ENCODE measurements at regions of chr7 and their contacts with region 1.

Region 1: GRCh38 chr7:134710859-134711624 is 64.4 kb downstream of the BPGM start:
- DNase-seq: peak; percentile 80
- ATAC-seq: peak; percentile 94
- H3K4me3 Mint-ChIP-seq: peak overlapping the region; percentile 78
- H3K27ac Mint-ChIP-seq: peak overlapping the region; percentile 97
- H3K4me1 Mint-ChIP-seq: peaks cover 31% of the 10 kb centered on the region
- H3K27me3 Mint-ChIP-seq: no peaks in the 10 kb centered on the region

Region 2: DNA sequence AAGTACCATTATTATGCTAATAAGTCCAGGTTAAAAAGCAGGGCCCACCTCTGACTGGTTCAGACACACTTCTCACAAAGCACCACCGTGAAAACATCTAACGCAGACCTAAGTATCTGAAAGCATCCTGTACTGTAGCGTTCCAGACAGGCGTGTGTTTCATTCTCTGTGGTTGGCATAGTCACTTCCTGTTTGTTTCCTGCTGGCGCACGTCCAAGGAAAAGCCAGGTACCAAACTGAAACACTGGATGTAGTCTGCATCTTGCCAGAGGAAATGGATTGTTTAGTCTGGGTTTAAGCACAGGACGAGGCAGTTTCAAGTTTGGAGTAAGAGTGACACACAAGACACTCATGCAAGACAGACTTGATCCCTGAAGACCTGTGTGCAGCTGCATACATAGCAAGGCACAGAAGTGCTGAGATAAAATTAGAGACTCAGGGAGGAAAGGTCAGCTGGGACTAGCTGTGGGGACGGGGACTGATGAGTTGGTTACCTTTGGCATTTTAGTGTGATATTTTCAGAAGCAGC is 41.1 kb before region 1 on chr7:
- CTCF ChIA-PET with region 1: interaction called, 3 read pairs
- POLR2A ChIA-PET with region 1: no interaction called
- intact Hi-C with region 1: loop called (anchors 1 to 2 kb)
- DNase-seq: peak; percentile 83
- ATAC-seq: peak; percentile 75
- H3K4me3 Mint-ChIP-seq: peak overlapping the region; percentile 50
- H3K27ac Mint-ChIP-seq: peak overlapping the region; percentile 89
- H3K4me1 Mint-ChIP-seq: peaks cover 51% of the 10 kb centered on the region
- H3K27me3 Mint-ChIP-seq: no peaks in the 10 kb centered on the region

Region 3: DNA sequence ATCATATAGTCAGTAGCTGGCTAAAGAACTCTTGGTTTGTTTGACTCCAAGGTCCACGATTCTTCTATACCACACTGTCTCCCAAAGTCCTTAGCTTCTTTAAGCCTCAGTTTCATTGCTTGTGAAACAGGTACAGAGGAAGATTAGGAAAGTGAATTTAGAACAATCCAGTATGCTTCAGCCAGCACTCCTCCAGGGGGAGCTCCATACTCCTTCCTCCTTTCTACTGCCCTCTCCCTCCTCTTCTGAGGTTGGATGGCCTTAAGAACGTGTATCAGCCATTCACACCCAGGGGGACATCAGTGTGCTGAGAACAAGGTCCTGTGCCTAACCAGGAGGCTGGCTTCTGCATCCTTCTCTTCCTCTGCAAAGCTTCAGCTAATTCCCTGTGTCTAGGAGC is 13.6 kb after region 1 on chr7:
- CTCF ChIA-PET with region 1: interaction called, 10 read pairs
- POLR2A ChIA-PET with region 1: no interaction called
- intact Hi-C with region 1: no loop called
- DNase-seq: peak; percentile 37
- ATAC-seq: peak; percentile 68
- H3K4me3 Mint-ChIP-seq: no peak overlapping the region
- H3K27ac Mint-ChIP-seq: no peak overlapping the region
- H3K4me1 Mint-ChIP-seq: no peaks in the 10 kb centered on the region
- H3K27me3 Mint-ChIP-seq: no peaks in the 10 kb centered on the region

Region 4: GRCh38 chr7:134737566-134738345 is 26.7 kb after region 1 on chr7:
- CTCF ChIA-PET with region 1: no interaction called
- POLR2A ChIA-PET with region 1: no interaction called
- intact Hi-C with region 1: loop called (anchors 1 to 2 kb)
- DNase-seq: peak; percentile 60
- ATAC-seq: peak; percentile 94
- H3K4me3 Mint-ChIP-seq: peak overlapping the region; percentile 26
- H3K27ac Mint-ChIP-seq: peak overlapping the region; percentile 84
- H3K4me1 Mint-ChIP-seq: peaks cover 39% of the 10 kb centered on the region
- H3K27me3 Mint-ChIP-seq: no peaks in the 10 kb centered on the region

Region 5: DNA sequence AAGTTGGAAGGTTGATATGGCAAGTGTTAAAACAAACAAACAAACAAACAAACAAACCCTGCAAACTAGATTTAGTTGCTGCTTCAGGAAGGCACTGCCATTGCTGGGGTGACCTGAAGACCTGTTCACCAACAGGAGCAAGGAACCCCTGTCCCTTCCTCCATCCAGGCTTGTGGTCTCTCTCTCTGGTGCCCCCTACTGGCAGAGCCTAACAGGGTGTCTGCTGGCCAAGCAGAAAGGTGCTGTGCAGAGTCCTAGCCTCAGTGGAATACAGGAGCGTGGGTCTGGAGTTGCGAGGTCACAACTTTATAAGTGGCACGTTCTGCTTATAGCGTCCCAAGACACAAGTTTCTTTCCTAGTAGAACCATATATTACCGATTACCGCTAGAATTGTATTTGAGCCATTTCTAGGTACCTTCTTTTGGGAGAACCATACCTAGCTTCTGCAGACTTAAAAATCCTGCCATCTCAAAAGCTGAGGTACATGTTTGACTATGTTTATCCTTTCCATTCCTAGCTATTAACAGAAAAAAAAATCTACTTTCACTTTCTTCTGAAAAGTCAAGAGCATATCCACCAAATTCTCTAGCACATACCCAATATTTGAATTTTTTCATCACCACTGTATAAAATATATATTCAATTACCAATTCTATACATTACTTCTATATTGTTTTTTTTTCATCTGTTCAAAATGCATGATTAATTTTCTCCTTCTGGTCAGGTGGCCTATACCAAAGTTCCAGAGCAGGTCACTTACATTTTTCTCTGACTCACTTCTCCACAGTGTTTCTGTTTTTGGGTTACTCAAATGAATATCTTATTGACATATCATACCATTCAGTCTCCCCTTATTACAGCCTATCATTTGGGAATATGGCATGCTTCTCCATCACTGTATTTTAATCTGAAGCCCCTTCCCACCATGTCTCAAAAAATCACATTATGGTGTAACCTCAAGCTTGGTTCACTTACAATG is 39.3 kb after region 1 on chr7:
- CTCF ChIA-PET with region 1: interaction called, 7 read pairs
- POLR2A ChIA-PET with region 1: no interaction called
- intact Hi-C with region 1: loop called in 1 of 2 experiments (anchors 2 kb)
- DNase-seq: peak; percentile 84
- ATAC-seq: peak; percentile 87
- H3K4me3 Mint-ChIP-seq: no peak overlapping the region
- H3K27ac Mint-ChIP-seq: no peak overlapping the region
- H3K4me1 Mint-ChIP-seq: peaks cover 17% of the 10 kb centered on the region
- H3K27me3 Mint-ChIP-seq: no peaks in the 10 kb centered on the region

Region 6: DNA sequence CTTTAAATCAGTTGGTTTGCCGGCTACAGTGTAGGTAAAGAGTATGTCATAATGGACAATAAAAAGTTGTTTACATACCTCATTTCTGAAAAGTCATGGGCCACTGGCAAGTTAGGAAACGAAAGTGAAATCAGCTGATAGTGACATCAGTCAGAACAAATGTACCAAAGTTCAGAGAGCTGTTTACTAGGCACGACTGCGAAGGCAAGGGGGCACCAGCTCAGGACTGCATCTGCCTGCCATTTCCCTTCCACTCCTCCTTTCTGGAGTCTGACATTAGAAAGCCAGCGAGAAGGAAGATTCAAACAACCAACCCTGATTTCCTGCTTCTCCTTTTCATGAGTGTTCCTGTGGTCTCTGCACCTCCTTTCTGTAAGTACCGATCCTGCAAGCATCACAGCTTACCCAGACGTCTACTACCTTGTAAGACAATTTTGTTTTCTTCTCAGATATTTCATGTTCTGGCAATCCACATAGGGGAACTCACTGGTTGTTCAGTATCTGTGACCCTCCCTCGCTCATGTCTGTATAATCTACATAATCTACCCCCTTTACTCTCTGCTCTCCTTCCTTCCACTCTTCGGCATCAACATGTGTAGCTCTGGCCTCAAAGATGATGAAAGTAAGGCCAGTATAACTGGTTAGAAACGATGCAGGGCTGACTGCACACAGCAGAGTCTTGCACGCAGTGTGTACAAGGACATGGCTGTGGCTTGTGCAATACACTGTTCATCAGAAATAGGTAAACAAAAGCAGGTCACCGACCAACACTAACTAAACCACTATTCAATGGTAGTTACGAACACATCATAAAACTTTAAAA is 437.1 kb after region 1 on chr7 and contains the start of gene TMEM140:
- CTCF ChIA-PET with region 1: no interaction called
- POLR2A ChIA-PET with region 1: interaction called, 3 read pairs
- intact Hi-C with region 1: loop called in 1 of 2 experiments (anchors 5 kb)
- DNase-seq: peak; percentile 75
- ATAC-seq: peak; percentile 81
- H3K4me3 Mint-ChIP-seq: peak within 1 kb of the TSS; percentile 79
- H3K27ac Mint-ChIP-seq: peak within 1 kb of the TSS; percentile 92
- H3K4me1 Mint-ChIP-seq: peaks cover 52% of the 10 kb centered on the region
- H3K27me3 Mint-ChIP-seq: no peaks in the 10 kb centered on the region
- total RNA-seq, gene TMEM140: 10.8 to 12.1 TPM

Measured in activated CD4-positive, alpha-beta T cell treated with anti-CD3 and anti-CD28 coated beads for 36 hours (primary cell).